Activated naive CD4-positive, alpha-beta T cell treated with anti-CD3 and anti-CD28 coated beads for 36 hours (primary cell): ENCODE measurements at regions of chr15 and their contacts with region 1.

Region 1: DNA sequence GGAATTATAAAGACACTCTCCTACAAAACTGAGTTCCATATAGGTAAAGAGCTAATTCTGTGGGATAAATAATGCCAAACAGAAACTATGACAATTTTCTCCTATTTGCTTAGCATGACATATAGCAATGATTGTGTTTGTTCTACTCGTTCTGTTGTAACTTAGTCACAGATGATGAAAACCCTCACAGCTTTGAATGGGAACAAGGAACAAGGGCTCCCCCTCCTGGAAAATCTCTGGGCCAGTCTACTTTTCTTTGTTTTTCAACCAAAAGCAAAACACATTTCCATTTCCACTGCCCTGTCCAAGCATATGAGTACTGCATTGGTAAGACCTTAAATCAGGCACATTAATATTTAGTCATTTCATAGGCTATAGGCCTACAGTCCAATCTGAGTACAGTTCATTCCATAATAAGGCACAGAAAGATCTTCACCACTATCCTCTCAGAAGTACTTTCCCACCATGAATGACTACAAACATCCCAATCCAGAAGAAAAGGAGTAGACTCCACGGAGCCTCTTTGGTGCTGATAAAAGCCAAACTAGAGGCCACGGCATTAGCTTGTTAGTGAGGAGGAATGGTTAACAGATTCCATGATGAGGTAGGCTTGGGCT is 67.1 kb downstream of the ATP8B4 start:
- DNase-seq: peak; percentile 58
- H3K4me3 Mint-ChIP-seq: no peak overlapping the region
- H3K27ac Mint-ChIP-seq: no peak overlapping the region
- H3K4me1 Mint-ChIP-seq: peaks cover 2% of the 10 kb centered on the region
- H3K27me3 Mint-ChIP-seq: peaks cover 15% of the 10 kb centered on the region

Region 2: GRCh38 chr15:49235446-49236124 is 816.3 kb before region 1 on chr15:
- CTCF ChIA-PET with region 1: no interaction called
- intact Hi-C with region 1: loop called (anchors 2 kb)
- DNase-seq: peak; percentile 67
- H3K4me3 Mint-ChIP-seq: no peak overlapping the region
- H3K27ac Mint-ChIP-seq: no peak overlapping the region
- H3K4me1 Mint-ChIP-seq: peaks cover 3% of the 10 kb centered on the region
- H3K27me3 Mint-ChIP-seq: no peaks in the 10 kb centered on the region

Region 3: GRCh38 chr15:50077651-50078050 is 25.7 kb after region 1 on chr15:
- CTCF ChIA-PET with region 1: no interaction called
- intact Hi-C with region 1: no loop called
- DNase-seq: no peak
- H3K4me3 Mint-ChIP-seq: no peak overlapping the region
- H3K27ac Mint-ChIP-seq: no peak overlapping the region
- H3K4me1 Mint-ChIP-seq: no peaks in the 10 kb centered on the region
- H3K27me3 Mint-ChIP-seq: peaks cover 9% of the 10 kb centered on the region